ENCODE measurements at regions of chr1 and their contacts with region 1.

Region 1: DNA sequence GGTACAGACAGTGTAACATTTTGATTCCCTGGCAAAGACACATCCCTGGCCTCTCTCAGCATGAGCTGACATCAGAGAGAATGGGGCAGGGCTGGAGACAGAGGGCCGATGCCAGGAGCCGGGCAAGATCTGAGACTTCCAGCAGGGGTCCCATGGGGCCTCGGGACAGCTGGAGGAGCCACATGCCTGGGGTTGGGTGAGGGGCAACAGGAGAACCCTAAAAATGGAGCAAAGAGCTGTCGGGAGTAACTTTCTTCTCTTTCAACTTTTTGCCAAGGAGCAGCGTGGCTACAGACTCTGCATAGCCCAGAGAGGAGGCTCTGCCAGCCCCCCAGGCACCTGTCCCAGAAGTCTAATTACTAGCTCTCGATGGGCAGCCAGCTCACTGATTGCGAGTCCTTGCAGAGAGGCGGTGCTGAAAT is 130.8 kb downstream of the LACTBL1 start:
- DNase-seq: no peak
- H3K4me3 ChIP-seq: no peak overlapping the region
- H3K27ac ChIP-seq: no peak overlapping the region
- H3K4me1 ChIP-seq: no peaks in the 10 kb centered on the region
- H3K27me3 ChIP-seq: no peaks in the 10 kb centered on the region
- CTCF ChIP-seq: no peak
- POLR2A ChIP-seq: no peak

Region 2: DNA sequence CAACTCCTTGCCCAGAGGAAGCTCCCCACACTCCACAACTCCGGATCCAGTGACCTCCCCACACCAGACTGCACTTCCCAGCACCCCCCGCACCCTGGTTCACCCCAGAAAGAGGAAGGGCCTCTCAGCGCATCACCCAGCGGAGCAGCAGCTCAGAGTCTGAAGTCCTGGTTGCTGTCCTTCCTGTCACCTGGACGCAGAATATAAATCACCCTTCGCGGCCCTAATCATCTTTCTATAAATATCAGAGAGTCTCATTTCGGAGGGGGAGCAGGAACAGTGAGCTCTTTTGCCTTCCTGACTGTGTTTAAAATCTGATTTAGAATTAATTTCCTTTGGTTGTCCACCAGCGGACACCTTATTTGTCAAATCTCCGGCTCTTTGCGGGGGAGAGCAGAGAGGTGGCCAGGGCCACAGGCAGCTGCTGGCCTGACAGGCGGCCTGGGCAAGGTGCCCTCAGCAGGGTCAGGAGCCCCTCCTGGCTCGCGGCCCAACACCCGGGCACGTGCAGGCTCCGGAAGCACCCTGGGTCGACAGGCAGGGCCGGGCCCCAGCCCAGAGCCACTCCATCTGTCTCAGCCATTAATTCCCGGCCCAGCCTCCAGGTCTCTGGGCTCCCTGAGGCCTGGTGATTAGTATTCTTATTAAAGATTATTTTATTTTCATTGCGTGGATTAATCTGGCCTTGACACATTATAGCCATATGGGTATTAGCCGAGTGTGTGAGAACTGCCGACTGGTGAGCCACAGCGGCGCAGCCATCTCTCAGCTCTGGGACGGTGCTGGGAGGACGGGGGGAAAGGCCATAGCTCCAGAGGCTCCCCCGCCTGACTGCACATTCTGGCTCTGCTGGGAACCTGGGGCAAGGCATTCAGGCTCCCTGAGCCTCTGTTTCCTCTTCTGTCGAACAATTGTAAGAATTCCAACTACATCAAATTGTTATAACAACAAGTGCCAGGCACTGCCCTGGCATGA is 258.9 kb before region 1 on chr1:
- intact Hi-C with region 1: no loop called
- DNase-seq: no peak
- H3K4me3 ChIP-seq: no peak overlapping the region
- H3K27ac ChIP-seq: no peak overlapping the region
- H3K4me1 ChIP-seq: no peaks in the 10 kb centered on the region
- H3K27me3 ChIP-seq: peaks cover 0 to 13% of the 10 kb centered on the region in 2 donors
- CTCF ChIP-seq: no peak
- POLR2A ChIP-seq: no peak

Region 3: GRCh38 chr1:22868331-22868730 is 26.5 kb after region 1 on chr1:
- intact Hi-C with region 1: loop called (anchors 2 kb)
- DNase-seq: no peak
- H3K4me3 ChIP-seq: no peak overlapping the region
- H3K27ac ChIP-seq: no peak overlapping the region
- H3K4me1 ChIP-seq: peaks cover 0 to 4% of the 10 kb centered on the region in 2 donors
- H3K27me3 ChIP-seq: no peaks in the 10 kb centered on the region
- CTCF ChIP-seq: no peak
- POLR2A ChIP-seq: no peak

Region 4: GRCh38 chr1:22889213-22889827 is 47.4 kb after region 1 on chr1:
- intact Hi-C with region 1: no loop called
- DNase-seq: no peak
- H3K4me3 ChIP-seq: no peak overlapping the region
- H3K27ac ChIP-seq: no peak overlapping the region
- H3K4me1 ChIP-seq: no peaks in the 10 kb centered on the region
- H3K27me3 ChIP-seq: no peaks in the 10 kb centered on the region
- CTCF ChIP-seq: peak; percentile 47 to 71 (median 70)
- POLR2A ChIP-seq: no peak